ENCODE measurements at regions of chr20 and their contacts with region 1.

Region 1: GRCh38 chr20:50189681-50190582 is 698 bp upstream of the CEBPB start:
- DNase-seq: peak; percentile 94 to 95 (median 95)
- ATAC-seq: peak; percentile 45 to 71 (median 55)
- H3K4me3 ChIP-seq: peak overlapping the region; percentile 67 to 88 (median 85)
- H3K27ac ChIP-seq: peak overlapping the region; percentile 98
- H3K4me1 ChIP-seq: peaks cover 0 to 34% (median 14%) of the 10 kb centered on the region in 4 donors
- H3K27me3 ChIP-seq: no peaks in the 10 kb centered on the region
- CTCF ChIP-seq: peak; percentile 67 to 80 (median 76)
- POLR2A ChIP-seq: no peak

Region 2: GRCh38 chr20:50245498-50246356 is 55.8 kb after region 1 on chr20:
- intact Hi-C with region 1: no loop called
- DNase-seq: no peak
- ATAC-seq: peak; percentile 9 to 41 (median 32)
- H3K4me3 ChIP-seq: no peak overlapping the region
- H3K27ac ChIP-seq: peak overlapping the region in 1 of 3 donors; percentile 29
- H3K4me1 ChIP-seq: peaks cover 0 to 51% (median 22%) of the 10 kb centered on the region in 4 donors
- H3K27me3 ChIP-seq: no peaks in the 10 kb centered on the region
- CTCF ChIP-seq: no peak
- POLR2A ChIP-seq: no peak

Region 3: GRCh38 chr20:50308513-50309279 is 118.8 kb after region 1 on chr20:
- intact Hi-C with region 1: loop called in 1 of 2 experiments (anchors 5 kb)
- DNase-seq: peak; percentile 91 to 97 (median 96)
- ATAC-seq: peak; percentile 49 to 70 (median 56)
- H3K4me3 ChIP-seq: no peak overlapping the region
- H3K27ac ChIP-seq: peak overlapping the region; percentile 84 to 99 (median 91)
- H3K4me1 ChIP-seq: peaks cover 0 to 79% (median 32%) of the 10 kb centered on the region in 4 donors
- H3K27me3 ChIP-seq: no peaks in the 10 kb centered on the region
- CTCF ChIP-seq: peak in 3 of 4 donors; percentile 24 to 26 (median 24)
- POLR2A ChIP-seq: peak; percentile 77

Region 4: GRCh38 chr20:50379049-50379990 is 189.4 kb after region 1 on chr20:
- intact Hi-C with region 1: loop called in 1 of 2 experiments (anchors 5 kb)
- DNase-seq: peak; percentile 86 to 92 (median 86)
- ATAC-seq: peak; percentile 63 to 79 (median 73)
- H3K4me3 ChIP-seq: no peak overlapping the region
- H3K27ac ChIP-seq: peak overlapping the region; percentile 67 to 77 (median 77)
- H3K4me1 ChIP-seq: peaks cover 0 to 49% (median 19%) of the 10 kb centered on the region in 4 donors
- H3K27me3 ChIP-seq: no peaks in the 10 kb centered on the region
- CTCF ChIP-seq: no peak
- POLR2A ChIP-seq: peak; percentile 79

Region 5: GRCh38 chr20:50399917-50400704 is 210.2 kb after region 1 on chr20:
- intact Hi-C with region 1: loop called in 1 of 2 experiments (anchors 5 kb)
- DNase-seq: peak; percentile 78 to 90 (median 84)
- ATAC-seq: peak; percentile 26 to 55 (median 44)
- H3K4me3 ChIP-seq: peak overlapping the region in 2 of 3 donors; percentile 17 to 34
- H3K27ac ChIP-seq: peak overlapping the region; percentile 81 to 95 (median 93)
- H3K4me1 ChIP-seq: peaks cover 0 to 100% (median 34%) of the 10 kb centered on the region in 4 donors
- H3K27me3 ChIP-seq: no peaks in the 10 kb centered on the region
- CTCF ChIP-seq: peak in 2 of 4 donors; percentile 10 to 20
- POLR2A ChIP-seq: peak; percentile 60

Region 6: DNA sequence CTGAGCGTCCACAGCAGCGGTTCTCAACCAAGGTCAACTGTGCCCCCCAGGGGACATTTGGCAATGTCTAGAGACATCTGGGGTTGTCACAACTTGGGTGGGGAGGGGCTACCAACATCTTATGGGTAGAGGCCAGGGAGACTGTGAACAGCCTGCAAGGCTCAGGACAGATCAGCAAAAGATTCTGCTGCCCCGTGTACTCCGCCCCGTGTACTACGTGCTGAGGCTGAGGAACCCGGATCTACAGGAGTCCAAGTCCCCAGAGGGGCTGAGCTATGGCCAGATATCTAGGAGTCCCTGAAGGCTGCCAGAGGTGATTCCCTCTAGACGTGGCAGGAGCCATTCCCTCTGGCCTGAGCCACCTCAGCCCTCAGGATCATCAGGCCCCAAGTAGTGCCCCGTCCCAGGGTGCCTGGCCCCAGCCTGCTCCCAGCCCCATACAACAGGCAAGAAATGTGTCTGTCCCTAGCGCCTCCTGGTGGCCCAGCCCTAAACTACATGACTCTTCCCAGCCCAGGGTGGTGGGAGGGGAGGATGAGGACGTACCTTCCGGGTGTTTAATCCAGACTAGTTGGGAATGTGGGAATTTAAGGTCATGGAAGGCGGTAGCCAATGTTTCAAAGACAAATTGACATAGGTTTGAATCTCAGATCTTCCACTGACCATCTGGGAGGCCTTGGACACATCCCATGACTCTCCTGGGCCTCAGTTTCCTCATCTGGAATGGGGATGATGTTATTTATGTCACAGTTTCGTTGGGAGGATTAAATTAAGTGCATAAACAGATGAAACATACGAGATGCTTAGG is 270.7 kb after region 1 on chr20:
- intact Hi-C with region 1: loop called (anchors 5 kb)
- DNase-seq: peak; percentile 89 to 92 (median 91)
- ATAC-seq: peak; percentile 85 to 92 (median 88)
- H3K4me3 ChIP-seq: no peak overlapping the region
- H3K27ac ChIP-seq: peak overlapping the region; percentile 64 to 76 (median 72)
- H3K4me1 ChIP-seq: peaks cover 0 to 39% (median 18%) of the 10 kb centered on the region in 4 donors
- H3K27me3 ChIP-seq: no peaks in the 10 kb centered on the region
- CTCF ChIP-seq: peak; percentile 93 to 99 (median 94)
- POLR2A ChIP-seq: peak; percentile 48

Region 7: GRCh38 chr20:50575847-50576720 is 386.2 kb after region 1 on chr20:
- intact Hi-C with region 1: loop called (anchors 5 to 10 kb)
- DNase-seq: peak; percentile 76 to 83 (median 83)
- ATAC-seq: peak; percentile 68 to 76 (median 69)
- H3K4me3 ChIP-seq: no peak overlapping the region
- H3K27ac ChIP-seq: peak overlapping the region in 2 of 3 donors; percentile 0 to 50
- H3K4me1 ChIP-seq: peaks cover 0 to 46% (median 14%) of the 10 kb centered on the region in 4 donors
- H3K27me3 ChIP-seq: no peaks in the 10 kb centered on the region
- CTCF ChIP-seq: peak; percentile 79 to 88 (median 82)
- POLR2A ChIP-seq: no peak

Region 8: GRCh38 chr20:50588034-50588611 is 398.2 kb after region 1 on chr20:
- intact Hi-C with region 1: loop called in 1 of 2 experiments (anchors 10 kb)
- DNase-seq: peak; percentile 79 to 83 (median 79)
- ATAC-seq: peak; percentile 62 to 84 (median 74)
- H3K4me3 ChIP-seq: no peak overlapping the region
- H3K27ac ChIP-seq: no peak overlapping the region
- H3K4me1 ChIP-seq: peaks cover 0 to 11% (median 5%) of the 10 kb centered on the region in 4 donors
- H3K27me3 ChIP-seq: no peaks in the 10 kb centered on the region
- CTCF ChIP-seq: peak; percentile 79 to 97 (median 96)
- POLR2A ChIP-seq: no peak